ENCODE measurements at regions of chr1 and their contacts with region 1.

Region 1: DNA sequence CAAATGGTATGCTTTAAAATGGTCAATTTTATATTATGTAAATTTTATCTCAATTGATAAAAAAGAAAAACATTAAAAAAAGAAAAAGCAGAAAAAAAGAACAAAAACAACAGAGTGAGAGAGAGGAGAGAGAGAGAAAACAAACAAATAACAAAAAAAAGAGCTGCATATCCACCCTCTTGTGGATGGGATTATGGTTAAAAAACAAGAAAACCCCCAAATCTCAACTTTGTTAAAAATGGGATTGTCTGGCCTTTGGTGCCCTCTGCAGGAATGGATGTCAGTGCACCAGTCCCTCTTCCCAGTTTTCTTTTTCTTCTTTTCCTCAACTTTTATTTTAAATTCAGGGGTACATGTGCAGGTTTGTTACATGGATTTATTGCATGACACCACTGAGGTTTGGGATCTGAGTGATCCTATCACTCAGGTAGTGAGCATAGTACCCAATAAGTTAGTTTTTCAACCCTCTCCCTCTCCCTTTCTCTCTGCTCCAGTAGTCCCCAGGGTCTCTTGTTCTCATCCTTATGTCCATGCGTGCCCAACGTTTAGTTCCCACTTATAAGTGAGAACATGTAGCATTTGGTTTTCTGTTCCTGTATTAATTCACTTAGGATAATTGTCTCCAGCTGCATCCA is 28.1 kb downstream of the RNF187 start:
- DNase-seq: peak; percentile 75 to 79 (median 77)
- ATAC-seq: peak; percentile 55
- H3K4me3 ChIP-seq: no peak overlapping the region
- H3K27ac ChIP-seq: no peak overlapping the region
- H3K4me1 ChIP-seq: peaks cover 42 to 46% of the 10 kb centered on the region in 2 experiments
- H3K27me3 ChIP-seq: peaks cover 0 to 2% of the 10 kb centered on the region in 2 experiments; a peak in 1 of 5 replicates
- CTCF ChIP-seq: peak; percentile 89 to 98 (median 95)
- EP300 ChIP-seq: no peak
- POLR2A ChIP-seq: no peak
- RAD21 ChIP-seq: peak; percentile 98 to 99

Region 2: GRCh38 chr1:227762233-227762911 is 752.9 kb before region 1 on chr1:
- CTCF ChIA-PET with region 1: interaction called, 6 read pairs
- POLR2A ChIA-PET with region 1: no interaction called
- in situ Hi-C with region 1: loop called (anchors 5 kb)
- intact Hi-C with region 1: no loop called
- DNase-seq: peak; percentile 90 to 97 (median 97)
- ATAC-seq: peak; percentile 100
- H3K4me3 ChIP-seq: no peak overlapping the region
- H3K27ac ChIP-seq: no peak overlapping the region
- H3K4me1 ChIP-seq: peaks cover 5 to 20% of the 10 kb centered on the region in 2 experiments
- H3K27me3 ChIP-seq: no peaks in the 10 kb centered on the region
- CTCF ChIP-seq: peak; percentile 98
- EP300 ChIP-seq: no peak
- POLR2A ChIP-seq: no peak
- RAD21 ChIP-seq: peak; percentile 94 to 96

Region 3: GRCh38 chr1:228004331-228004855 is 510.9 kb before region 1 on chr1:
- CTCF ChIA-PET with region 1: interaction called, 7 read pairs
- POLR2A ChIA-PET with region 1: no interaction called
- in situ Hi-C with region 1: loop called (anchors 5 kb)
- intact Hi-C with region 1: loop called (anchors 5 kb)
- DNase-seq: peak; percentile 63 to 75 (median 66)
- ATAC-seq: peak; percentile 94
- H3K4me3 ChIP-seq: no peak overlapping the region
- H3K27ac ChIP-seq: no peak overlapping the region
- H3K4me1 ChIP-seq: peaks cover 0 to 39% of the 10 kb centered on the region in 2 experiments; a peak in 2 of 5 replicates
- H3K27me3 ChIP-seq: peaks cover 34 to 79% of the 10 kb centered on the region in 2 experiments
- CTCF ChIP-seq: peak; percentile 72 to 80 (median 78)
- EP300 ChIP-seq: no peak
- POLR2A ChIP-seq: no peak
- RAD21 ChIP-seq: peak in 1 of 2 experiments; percentile 67; a peak in 2 of 4 replicates

Region 4: GRCh38 chr1:228212966-228213844 is 302.1 kb before region 1 on chr1:
- CTCF ChIA-PET with region 1: interaction called, 15 read pairs
- POLR2A ChIA-PET with region 1: interaction called, 6 read pairs
- in situ Hi-C with region 1: no loop called
- intact Hi-C with region 1: loop called (anchors 5 kb)
- DNase-seq: peak; percentile 92 to 98 (median 95)
- ATAC-seq: peak; percentile 98
- H3K4me3 ChIP-seq: peak overlapping the region; percentile 55
- H3K27ac ChIP-seq: peak overlapping the region; percentile 79; the same call in 2 of the 3 replicates
- H3K4me1 ChIP-seq: peaks cover 0 to 58% of the 10 kb centered on the region in 2 experiments; a peak in 3 of 5 replicates
- H3K27me3 ChIP-seq: peaks cover 0 to 3% of the 10 kb centered on the region in 2 experiments; a peak in 2 of 5 replicates
- CTCF ChIP-seq: peak; percentile 63 to 95 (median 85); a peak in 5 of 6 replicates
- EP300 ChIP-seq: no peak
- POLR2A ChIP-seq: peak; percentile 34; the same call in 1 of the 2 replicates
- RAD21 ChIP-seq: peak; percentile 63 to 66

Region 5: GRCh38 chr1:228265167-228265566 is 250.2 kb before region 1 on chr1:
- CTCF ChIA-PET with region 1: interaction called, 4 read pairs
- POLR2A ChIA-PET with region 1: no interaction called
- in situ Hi-C with region 1: no loop called
- intact Hi-C with region 1: loop called (anchors 1 kb)
- DNase-seq: peak; percentile 53 to 67 (median 60)
- ATAC-seq: peak; percentile 84
- H3K4me3 ChIP-seq: no peak overlapping the region
- H3K27ac ChIP-seq: no peak overlapping the region
- H3K4me1 ChIP-seq: peaks cover 4 to 21% of the 10 kb centered on the region in 2 experiments; a peak in 4 of 5 replicates
- H3K27me3 ChIP-seq: no peaks in the 10 kb centered on the region
- CTCF ChIP-seq: peak; percentile 63 to 66 (median 65)
- EP300 ChIP-seq: no peak
- POLR2A ChIP-seq: no peak
- RAD21 ChIP-seq: peak; percentile 58 to 76

Region 6: GRCh38 chr1:228471762-228472398 is 43.4 kb before region 1 on chr1:
- CTCF ChIA-PET with region 1: interaction called, 4 read pairs
- POLR2A ChIA-PET with region 1: interaction called, 3 read pairs
- in situ Hi-C with region 1: no loop called
- intact Hi-C with region 1: loop called (anchors 1 kb)
- DNase-seq: peak; percentile 65 to 79 (median 70)
- ATAC-seq: peak; percentile 93
- H3K4me3 ChIP-seq: no peak overlapping the region
- H3K27ac ChIP-seq: no peak overlapping the region
- H3K4me1 ChIP-seq: peaks cover 19 to 23% of the 10 kb centered on the region in 2 experiments
- H3K27me3 ChIP-seq: peaks cover 0 to 11% of the 10 kb centered on the region in 2 experiments; a peak in 3 of 5 replicates
- CTCF ChIP-seq: peak; percentile 82 to 89 (median 84)
- EP300 ChIP-seq: no peak
- POLR2A ChIP-seq: no peak
- RAD21 ChIP-seq: peak; percentile 66 to 80

Measured in K562 (cell line).